Dorsolateral prefrontal cortex (tissue), 120 donors: ENCODE measurements at regions of chr2 and their contacts with region 1.

Region 1: DNA sequence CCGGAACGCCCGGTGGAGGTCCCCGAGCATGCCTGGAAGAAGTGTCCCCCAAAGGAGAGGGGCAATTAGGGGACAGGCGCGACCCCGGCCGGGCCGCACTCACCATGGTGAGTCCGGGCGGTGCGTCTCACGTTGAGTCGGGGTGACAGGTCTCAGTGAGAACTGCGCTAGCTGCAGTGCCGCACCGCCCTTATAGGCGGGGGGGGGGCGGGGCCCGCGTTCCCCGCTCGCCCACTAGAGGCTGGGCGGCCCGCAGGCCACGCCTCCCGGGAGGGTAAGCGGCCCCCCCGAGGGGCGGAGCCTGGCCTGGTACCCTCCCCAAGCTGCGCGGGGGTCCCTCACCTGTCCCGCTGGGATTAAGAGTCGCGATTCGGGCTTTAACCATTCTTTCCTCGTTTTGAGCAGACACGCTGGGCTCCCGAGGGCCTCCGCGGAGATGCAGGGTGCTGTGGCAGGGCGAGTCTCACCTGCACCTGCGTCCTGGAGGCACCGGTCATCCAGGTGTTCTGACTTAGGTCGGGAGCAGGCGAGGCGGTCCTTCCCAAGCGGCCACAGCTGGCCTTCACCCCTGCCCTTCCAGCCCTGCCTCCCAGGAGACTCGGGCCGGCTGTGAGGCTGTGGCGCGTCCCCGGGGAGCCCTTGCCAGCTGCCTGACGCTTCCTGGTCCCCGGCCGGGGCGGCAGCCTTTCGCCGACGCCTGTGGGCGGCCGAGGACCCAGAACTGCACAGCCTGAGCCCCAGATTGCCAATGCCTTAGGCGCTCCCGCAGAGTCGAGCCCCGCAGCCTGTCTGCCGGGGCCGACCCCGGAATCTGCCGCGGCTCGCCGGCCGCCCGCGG is at the start of gene TUBA4A:
- DNase-seq: peak; percentile 72 to 92 (median 88)
- H3K4me3 ChIP-seq: peak within 1 kb of the TSS; percentile 53 to 99 (median 80)
- H3K27ac ChIP-seq: peak within 1 kb of the TSS in 58 of 59 donors; percentile 42 to 94 (median 84)
- H3K27me3 ChIP-seq: no peaks in the 10 kb centered on the region
- CTCF ChIP-seq: peak in 39 of 56 donors; percentile 6 to 51 (median 27)
- total RNA-seq, gene TUBA4A: 85.5 to 377 (median 243) TPM

Region 2: GRCh38 chr2:219278655-219279516 is 24.9 kb after region 1 on chr2 and contains the start of gene DNAJB2:
- intact Hi-C with region 1: loop called in 1 of 2 experiments (anchors 1 kb)
- DNase-seq: peak; percentile 98 to 99 (median 99)
- H3K4me3 ChIP-seq: peak within 1 kb of the TSS; percentile 73 to 99 (median 92)
- H3K27ac ChIP-seq: peak within 1 kb of the TSS; percentile 97 to 100 (median 100)
- H3K27me3 ChIP-seq: no peaks in the 10 kb centered on the region
- CTCF ChIP-seq: peak in 28 of 56 donors; percentile 2 to 57 (median 28)
- total RNA-seq, gene DNAJB2: 197 to 638 (median 283) TPM

Region 3: GRCh38 chr2:219352448-219353023 is 98.6 kb after region 1 on chr2:
- intact Hi-C with region 1: no loop called
- DNase-seq: peak; percentile 30 to 87 (median 64)
- H3K4me3 ChIP-seq: no peak overlapping the region
- H3K27ac ChIP-seq: no peak overlapping the region
- H3K27me3 ChIP-seq: peaks cover 0 to 46% (median 20%) of the 10 kb centered on the region in 45 donors
- CTCF ChIP-seq: peak; percentile 38 to 75 (median 64)